Activated T-helper 2 cell treated with anti-CD3 and anti-CD28 coated beads, Interferon-gamma antibody, Interleukin-2, Interleukin-4, amounts not matched to agents 10 μg/mL and 5 μg/mL and 100 μg/mL, durations not matched to agents 14 hours and 24 hours and 36 hours (primary cell): ENCODE measurements at regions of chr1 and their contacts with region 1.

Region 1: DNA sequence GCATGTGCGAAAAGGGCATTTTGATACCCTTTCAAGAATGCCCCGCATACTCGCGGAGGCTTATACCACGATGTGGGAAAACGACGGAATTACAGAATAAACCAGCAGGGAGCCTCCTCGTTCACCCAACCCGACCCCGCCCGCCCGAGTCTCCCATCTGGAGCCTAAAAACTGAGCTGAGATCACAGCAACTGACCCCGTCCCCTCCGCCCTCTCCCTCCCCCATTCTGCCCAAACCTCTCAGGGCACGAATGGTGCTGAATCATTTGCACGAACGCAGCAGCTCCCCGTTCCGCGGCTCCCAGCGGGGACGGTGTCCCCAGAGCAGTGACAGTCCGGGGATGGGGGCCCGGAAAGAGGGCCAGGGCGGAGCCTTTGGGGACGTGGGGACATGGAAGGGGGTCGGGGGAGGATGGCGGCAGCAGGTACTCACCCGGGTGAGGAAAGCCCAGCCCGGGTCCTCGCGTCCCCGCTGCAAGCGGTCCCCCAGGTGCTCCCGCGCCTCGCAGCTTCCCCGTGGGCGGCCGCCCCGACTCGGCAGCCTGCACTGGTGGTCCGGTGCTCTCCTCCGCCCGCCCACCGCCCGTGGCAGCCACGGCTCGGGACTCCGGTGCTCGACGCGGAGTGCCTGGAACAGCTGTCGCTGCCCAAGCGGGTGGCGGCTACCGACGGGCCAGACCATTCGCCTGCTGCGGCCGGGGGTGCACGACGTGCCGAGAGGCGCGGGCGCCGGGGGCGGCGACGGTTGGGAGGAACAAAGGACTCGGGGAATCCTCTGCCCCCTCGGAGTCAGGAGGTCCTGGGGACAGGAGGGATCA is at the start of gene TTLL7:
- DNase-seq: peak; percentile 63
- H3K4me3 Mint-ChIP-seq: peak within 1 kb of the TSS; percentile 82
- H3K27ac Mint-ChIP-seq: no peak within 1 kb of the TSS
- H3K4me1 Mint-ChIP-seq: peaks cover 17% of the 10 kb centered on the region
- H3K27me3 Mint-ChIP-seq: peaks cover 60% of the 10 kb centered on the region
- total RNA-seq, gene TTLL7: 0.84 and 1.4 TPM in 2 replicates

Region 2: DNA sequence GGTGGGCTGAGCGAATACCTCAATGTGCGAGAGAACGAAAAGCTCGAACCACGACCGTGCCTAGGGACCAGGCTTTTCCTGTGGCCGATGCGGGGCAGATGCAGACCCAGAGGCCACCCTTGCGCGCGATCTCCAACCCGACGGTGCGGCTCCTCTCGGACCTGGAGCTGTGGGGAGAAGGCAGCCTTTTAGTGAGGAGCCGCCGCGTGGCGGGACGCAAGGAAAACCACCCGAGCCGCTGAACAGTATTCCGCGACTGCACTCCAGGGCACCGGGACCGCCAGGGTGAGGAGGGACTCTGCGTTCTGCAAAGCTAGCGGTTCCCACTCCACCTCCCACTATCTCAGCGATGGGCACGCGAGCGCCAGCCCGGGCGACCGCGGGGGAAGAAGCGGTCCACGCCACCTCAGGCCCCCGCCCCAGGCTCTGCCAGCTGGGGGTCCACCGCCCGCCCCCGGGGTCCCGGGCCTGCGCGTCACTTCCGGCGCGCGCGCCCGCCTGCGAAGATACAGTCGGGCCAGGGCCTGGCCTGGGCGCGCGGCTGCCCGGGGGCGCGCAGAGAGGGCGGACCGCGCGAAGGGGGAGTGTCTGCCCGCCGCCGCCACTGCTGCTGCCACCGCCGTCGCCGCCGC is 78.9 kb after region 1 on chr1:
- intact Hi-C with region 1: loop called (anchors 1 kb)
- DNase-seq: peak; percentile 70
- H3K4me3 Mint-ChIP-seq: peak overlapping the region; percentile 84
- H3K27ac Mint-ChIP-seq: peak overlapping the region; percentile 59
- H3K4me1 Mint-ChIP-seq: peaks cover 13% of the 10 kb centered on the region
- H3K27me3 Mint-ChIP-seq: peaks cover 6% of the 10 kb centered on the region

Region 3: GRCh38 chr1:84156210-84156621 is 157.5 kb after region 1 on chr1:
- intact Hi-C with region 1: no loop called
- DNase-seq: no peak
- H3K4me3 Mint-ChIP-seq: no peak overlapping the region
- H3K27ac Mint-ChIP-seq: no peak overlapping the region
- H3K4me1 Mint-ChIP-seq: peaks cover 57% of the 10 kb centered on the region
- H3K27me3 Mint-ChIP-seq: no peaks in the 10 kb centered on the region

Region 4: DNA sequence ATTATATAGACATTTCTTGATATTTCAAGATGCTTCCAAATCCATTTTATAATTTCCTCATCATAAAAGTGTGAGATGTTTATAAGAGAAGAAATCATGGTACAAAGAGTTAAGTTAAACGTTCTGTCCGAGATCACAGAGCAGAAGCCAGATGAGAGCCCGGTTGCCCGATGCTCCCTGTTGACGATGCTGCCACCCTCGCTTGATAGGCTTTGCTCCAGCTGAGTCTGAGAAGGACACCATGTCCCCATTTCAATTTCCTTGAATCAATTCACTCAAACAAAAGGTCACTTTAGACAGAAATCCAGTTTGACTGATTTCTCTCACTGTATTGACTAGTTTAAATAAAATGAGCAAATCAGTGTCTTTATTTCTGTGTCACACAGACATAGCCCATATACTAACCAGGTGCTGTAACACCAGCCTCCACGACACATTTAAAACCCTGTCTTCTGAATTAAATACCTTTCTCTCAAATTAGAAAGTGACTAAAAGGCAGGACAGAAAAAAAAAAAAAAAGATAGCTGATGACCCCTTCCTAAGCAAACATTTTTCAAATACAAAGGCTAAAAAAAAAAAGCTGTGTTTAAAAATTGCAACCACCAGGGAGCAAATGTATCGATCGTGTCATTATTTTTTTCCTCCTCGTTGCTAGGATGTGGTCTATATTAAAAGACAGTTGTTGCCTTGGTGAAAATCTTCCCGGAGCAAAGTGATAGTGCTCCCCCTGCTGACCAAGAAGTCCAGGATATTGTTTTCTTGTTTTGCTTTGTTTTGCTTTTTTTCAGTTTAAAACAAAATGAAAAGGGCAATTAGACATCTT is 434.8 kb after region 1 on chr1:
- intact Hi-C with region 1: loop called (anchors 5 kb)
- DNase-seq: peak; percentile 54
- H3K4me3 Mint-ChIP-seq: peak overlapping the region; percentile 18
- H3K27ac Mint-ChIP-seq: no peak overlapping the region
- H3K4me1 Mint-ChIP-seq: peaks cover 3% of the 10 kb centered on the region
- H3K27me3 Mint-ChIP-seq: no peaks in the 10 kb centered on the region